GM10248 (cell line): ENCODE measurements at regions of chr11 and their contacts with region 1.

Region 1: GRCh38 chr11:128630367-128631230 is 43.2 kb upstream of the ETS1 start:
- DNase-seq: peak; percentile 77
- CTCF ChIP-seq: peak; percentile 79

Region 2: DNA sequence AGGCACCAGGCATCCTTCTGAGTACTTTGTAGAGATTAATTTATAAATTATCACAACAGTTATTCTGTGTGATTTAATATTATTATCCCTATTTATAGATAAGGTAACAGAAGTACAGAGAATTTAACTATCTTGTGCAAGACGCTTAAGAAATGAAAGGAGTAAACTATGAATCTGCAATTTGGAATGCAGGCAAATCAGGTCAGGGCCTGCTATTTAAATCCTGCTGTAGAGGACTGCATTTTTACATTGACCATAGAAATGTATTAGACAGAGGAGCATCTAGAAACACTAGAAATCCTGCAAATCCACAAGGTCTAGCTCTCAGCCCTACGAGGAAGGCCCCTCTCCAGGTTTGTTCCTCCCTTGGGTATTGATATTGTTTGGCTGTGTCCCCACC is 379.5 kb before region 1 on chr11:
- CTCF ChIA-PET with region 1: no interaction called
- POLR2A ChIA-PET with region 1: no interaction called
- DNase-seq: no peak
- CTCF ChIP-seq: no peak

Region 3: GRCh38 chr11:128290106-128290840 is 340.3 kb before region 1 on chr11:
- CTCF ChIA-PET with region 1: interaction called, 15 read pairs
- POLR2A ChIA-PET with region 1: interaction called, 7 read pairs
- DNase-seq: peak; percentile 77
- CTCF ChIP-seq: peak; percentile 67

Region 4: DNA sequence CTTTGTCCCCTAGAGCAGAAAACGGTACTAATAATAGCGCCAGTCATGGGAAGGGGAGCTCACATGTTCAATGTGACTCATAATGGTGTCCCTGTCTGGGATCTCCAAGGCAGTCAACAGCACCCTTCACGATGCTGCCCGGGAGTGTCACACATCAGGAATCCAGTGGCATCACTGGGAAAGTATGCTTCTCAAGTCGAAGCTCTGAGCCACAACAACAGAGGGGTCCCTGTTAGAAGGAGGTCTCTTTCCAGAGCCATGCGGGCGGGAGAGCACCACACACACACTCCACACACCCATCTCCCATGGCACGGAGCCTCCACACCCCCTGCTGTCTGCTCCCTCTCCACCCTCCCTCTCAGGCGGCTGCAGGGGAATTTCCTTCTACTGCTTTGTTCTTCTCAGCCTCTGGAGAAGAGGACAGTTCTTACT is 163.0 kb before region 1 on chr11:
- CTCF ChIA-PET with region 1: interaction called, 12 read pairs
- POLR2A ChIA-PET with region 1: no interaction called
- DNase-seq: no peak
- CTCF ChIP-seq: no peak

Region 5: DNA sequence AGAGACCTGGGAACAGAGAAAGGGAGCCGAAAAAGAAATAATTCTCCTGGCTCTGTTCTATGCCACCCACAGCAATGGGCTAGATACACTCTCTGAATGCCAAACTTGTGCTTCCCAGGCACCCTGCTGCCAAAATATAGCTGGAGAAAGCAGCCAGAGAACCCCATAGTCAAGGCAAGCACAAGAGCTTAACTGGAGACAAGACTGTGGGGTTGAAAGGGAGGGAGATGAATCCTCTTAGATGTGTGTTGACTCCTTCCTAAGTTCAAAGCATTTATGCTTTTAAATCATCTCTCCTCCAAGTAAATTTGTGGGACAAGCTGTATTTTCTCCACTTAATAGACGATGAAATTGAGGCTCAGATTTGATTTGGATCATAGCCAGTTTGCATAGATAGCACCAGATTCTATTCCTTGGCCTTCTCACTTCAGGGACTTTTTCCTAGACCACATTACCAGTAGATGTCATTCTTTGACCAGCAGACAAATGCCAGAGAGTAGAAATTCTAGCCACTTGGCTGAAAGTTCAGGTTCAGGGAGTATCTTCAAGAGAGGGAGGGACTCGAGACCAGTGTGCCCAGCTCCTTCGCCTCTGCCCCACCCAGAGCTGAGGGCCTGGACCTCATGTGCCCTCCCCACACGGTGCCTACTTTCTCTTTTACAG is 26.7 kb before region 1 on chr11:
- CTCF ChIA-PET with region 1: interaction called, 87 read pairs
- POLR2A ChIA-PET with region 1: no interaction called
- DNase-seq: peak; percentile 25
- CTCF ChIP-seq: peak; percentile 40